ENCODE measurements at regions of chrX and their contacts with region 1.

Region 1: DNA sequence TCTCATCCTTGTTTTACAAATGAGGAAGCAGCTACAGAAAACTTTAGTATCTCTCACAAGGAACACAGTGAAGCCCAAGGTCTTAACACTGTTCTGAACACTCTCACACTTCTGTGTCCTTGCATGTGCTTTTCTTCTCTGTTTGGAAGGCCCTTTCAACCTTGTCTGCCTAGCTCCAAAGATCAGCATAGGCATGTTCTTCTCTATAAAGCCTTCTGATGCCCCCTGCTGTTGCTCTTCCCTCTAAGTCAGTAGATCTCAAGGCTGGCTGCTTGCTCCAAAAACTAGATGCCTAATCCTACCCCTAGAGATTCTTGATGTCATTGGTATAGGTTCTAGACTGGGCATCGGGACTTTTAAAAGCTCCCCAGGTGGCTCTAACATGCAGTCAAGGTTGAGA is 5.9 kb downstream of the APOO start:
- DNase-seq: peak; percentile 21 to 59
- H3K4me3 ChIP-seq: no peak overlapping the region
- H3K27ac ChIP-seq: peak overlapping the region; percentile 54 to 85
- H3K4me1 ChIP-seq: no peaks in the 10 kb centered on the region
- H3K27me3 ChIP-seq: no peaks in the 10 kb centered on the region
- CTCF ChIP-seq: peak; percentile 34 to 72 (median 54)
- POLR2A ChIP-seq: no peak

Region 2: GRCh38 chrX:23667239-23668177 is 234.3 kb before region 1 on chrX and contains the start of gene PRDX4:
- intact Hi-C with region 1: no loop called
- DNase-seq: peak; percentile 86 to 88
- H3K4me3 ChIP-seq: peak within 1 kb of the TSS; percentile 40 to 45
- H3K27ac ChIP-seq: peak within 1 kb of the TSS; percentile 71 to 77
- H3K4me1 ChIP-seq: no peaks in the 10 kb centered on the region
- H3K27me3 ChIP-seq: no peaks in the 10 kb centered on the region
- CTCF ChIP-seq: peak in 1 of 4 experiments; percentile 2
- POLR2A ChIP-seq: peak; percentile 30 to 70
- total RNA-seq, gene PRDX4: 39.7 to 151 (median 97.2) TPM

Region 3: GRCh38 chrX:23694606-23695005 is 207.2 kb before region 1 on chrX:
- intact Hi-C with region 1: loop called (anchors 5 kb)
- DNase-seq: peak; percentile 41 to 57
- H3K4me3 ChIP-seq: no peak overlapping the region
- H3K27ac ChIP-seq: no peak overlapping the region
- H3K4me1 ChIP-seq: no peaks in the 10 kb centered on the region
- H3K27me3 ChIP-seq: no peaks in the 10 kb centered on the region
- CTCF ChIP-seq: peak; percentile 40 to 48 (median 42)
- POLR2A ChIP-seq: no peak

Region 4: DNA sequence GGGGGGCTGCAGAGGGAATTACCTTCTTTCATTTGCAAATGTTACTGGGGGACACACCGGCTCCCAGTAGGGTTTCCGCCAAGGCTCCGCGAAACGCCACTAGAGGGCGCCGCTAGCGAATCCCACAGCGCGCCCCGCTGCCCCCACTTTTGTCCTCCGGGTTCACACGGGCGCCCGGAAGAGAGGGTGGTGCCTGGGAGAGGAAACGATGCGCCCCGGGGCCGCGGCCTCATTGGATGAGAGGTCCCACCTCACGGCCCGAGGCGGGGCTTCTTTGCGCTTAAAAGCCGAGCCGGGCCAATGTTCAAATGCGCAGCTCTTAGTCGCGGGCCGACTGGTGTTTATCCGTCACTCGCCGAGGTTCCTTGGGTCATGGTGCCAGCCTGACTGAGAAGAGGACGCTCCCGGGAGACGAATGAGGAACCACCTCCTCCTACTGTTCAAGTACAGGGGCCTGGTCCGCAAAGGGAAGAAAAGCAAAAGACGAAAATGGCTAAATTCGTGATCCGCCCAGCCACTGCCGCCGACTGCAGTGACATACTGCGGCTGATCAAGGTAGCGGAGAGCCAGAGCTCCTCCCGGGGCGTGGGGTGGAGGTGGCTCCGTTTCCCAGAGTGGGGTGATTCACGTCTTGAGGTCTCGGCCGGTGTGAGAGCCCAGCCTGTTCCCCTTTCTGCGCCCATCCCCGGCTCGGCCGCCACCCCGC is 118.8 kb before region 1 on chrX and contains the start of gene SAT1:
- intact Hi-C with region 1: loop called (anchors 5 kb)
- DNase-seq: peak; percentile 92 to 95
- H3K4me3 ChIP-seq: peak within 1 kb of the TSS; percentile 67 to 72
- H3K27ac ChIP-seq: peak within 1 kb of the TSS; percentile 92 to 95
- H3K4me1 ChIP-seq: no peaks in the 10 kb centered on the region
- H3K27me3 ChIP-seq: no peaks in the 10 kb centered on the region
- CTCF ChIP-seq: peak; percentile 69 to 79 (median 76)
- POLR2A ChIP-seq: peak; percentile 89 to 95
- total RNA-seq, gene SAT1: 116 to 358 (median 220) TPM

Region 5: GRCh38 chrX:23930894-23931689 is 29.3 kb after region 1 on chrX:
- intact Hi-C with region 1: no loop called
- DNase-seq: no peak
- H3K4me3 ChIP-seq: no peak overlapping the region
- H3K27ac ChIP-seq: no peak overlapping the region
- H3K4me1 ChIP-seq: no peaks in the 10 kb centered on the region
- H3K27me3 ChIP-seq: no peaks in the 10 kb centered on the region
- CTCF ChIP-seq: no peak
- POLR2A ChIP-seq: no peak

Region 6: DNA sequence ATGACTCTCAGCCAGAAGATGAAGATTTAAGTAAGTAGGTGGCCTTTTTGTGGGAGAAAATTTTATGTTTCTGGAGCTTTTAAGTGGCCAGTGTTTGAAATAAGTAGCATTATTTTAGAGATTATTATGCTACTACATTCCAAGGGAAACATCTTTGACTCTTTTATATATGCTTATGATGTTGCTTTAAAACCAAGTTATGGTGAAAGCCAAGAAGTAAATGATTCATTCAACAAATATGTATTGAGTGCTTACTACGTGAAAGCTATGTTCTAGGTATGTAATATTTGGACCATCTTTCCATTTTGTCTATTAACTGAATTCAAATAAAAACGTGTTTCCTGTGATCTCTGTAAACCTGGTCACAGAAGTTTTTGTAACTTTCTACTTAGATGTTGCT is 306.0 kb after region 1 on chrX:
- intact Hi-C with region 1: no loop called
- DNase-seq: no peak
- H3K4me3 ChIP-seq: no peak overlapping the region
- H3K27ac ChIP-seq: no peak overlapping the region
- H3K4me1 ChIP-seq: no peaks in the 10 kb centered on the region
- H3K27me3 ChIP-seq: no peaks in the 10 kb centered on the region
- CTCF ChIP-seq: no peak
- POLR2A ChIP-seq: no peak